Endothelial cell of umbilical vein (primary cell): ENCODE measurements at regions of chrX and their contacts with region 1.

Region 1: DNA sequence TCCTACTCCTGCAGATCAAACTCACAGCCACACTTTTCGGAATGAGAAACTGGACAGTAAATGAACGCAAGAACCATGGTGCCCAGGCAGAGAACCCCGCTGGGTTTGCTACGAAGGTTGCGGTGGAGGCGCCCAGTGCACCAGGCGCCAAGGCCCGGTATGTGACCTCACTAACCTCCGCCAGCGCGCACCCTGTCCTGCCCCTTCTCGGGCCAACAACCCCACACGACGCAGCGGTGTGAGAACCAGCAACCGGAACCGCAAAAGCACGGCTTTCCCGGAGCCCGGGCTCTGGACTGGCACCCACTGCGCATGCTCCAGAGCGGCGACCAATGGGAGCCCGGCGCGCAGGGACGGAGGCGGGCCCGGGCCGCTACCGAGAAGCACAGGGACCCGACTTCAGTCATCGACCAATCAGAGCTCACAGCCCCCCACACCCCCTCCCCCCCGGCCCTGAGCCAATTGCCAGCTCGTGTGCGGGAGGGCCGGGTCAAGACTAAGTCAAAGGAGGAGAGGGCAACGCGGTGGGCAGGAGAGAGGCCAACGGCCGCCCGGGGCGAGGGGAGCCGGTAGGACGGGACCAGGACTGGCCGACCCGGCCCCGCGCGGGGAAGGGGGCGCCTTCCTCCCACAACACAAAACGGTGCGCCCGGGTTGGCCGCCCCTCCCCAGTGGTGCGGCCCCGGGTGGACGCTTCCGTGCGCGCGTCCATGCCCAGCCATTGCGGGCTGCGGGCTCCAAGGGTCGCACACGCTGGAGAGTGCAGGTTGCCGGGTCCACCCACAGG is 7.3 kb upstream of the WAS start:
- DNase-seq: peak; percentile 91
- H3K4me3 ChIP-seq: peak overlapping the region; percentile 62 to 82 (median 73)
- H3K27ac ChIP-seq: peak overlapping the region; percentile 41
- H3K4me1 ChIP-seq: no peaks in the 10 kb centered on the region
- H3K27me3 ChIP-seq: no peaks in the 10 kb centered on the region
- CTCF ChIP-seq: no peak
- POLR2A ChIP-seq: peak; percentile 59

Region 2: GRCh38 chrX:48475774-48476577 is 200.3 kb before region 1 on chrX and contains the start of gene FTSJ1:
- CTCF ChIA-PET with region 1: no interaction called
- POLR2A ChIA-PET with region 1: no interaction called
- dilution Hi-C with region 1: no loop called
- intact Hi-C with region 1: loop called (anchors 5 kb)
- DNase-seq: peak; percentile 92
- H3K4me3 ChIP-seq: peak within 1 kb of the TSS; percentile 76 to 91 (median 88)
- H3K27ac ChIP-seq: peak within 1 kb of the TSS; percentile 56
- H3K4me1 ChIP-seq: peaks cover 6% of the 10 kb centered on the region
- H3K27me3 ChIP-seq: no peaks in the 10 kb centered on the region
- CTCF ChIP-seq: no peak
- POLR2A ChIP-seq: peak; percentile 68
- total RNA-seq, gene FTSJ1: 52.9 and 59.9 TPM in 2 replicates

Region 3: DNA sequence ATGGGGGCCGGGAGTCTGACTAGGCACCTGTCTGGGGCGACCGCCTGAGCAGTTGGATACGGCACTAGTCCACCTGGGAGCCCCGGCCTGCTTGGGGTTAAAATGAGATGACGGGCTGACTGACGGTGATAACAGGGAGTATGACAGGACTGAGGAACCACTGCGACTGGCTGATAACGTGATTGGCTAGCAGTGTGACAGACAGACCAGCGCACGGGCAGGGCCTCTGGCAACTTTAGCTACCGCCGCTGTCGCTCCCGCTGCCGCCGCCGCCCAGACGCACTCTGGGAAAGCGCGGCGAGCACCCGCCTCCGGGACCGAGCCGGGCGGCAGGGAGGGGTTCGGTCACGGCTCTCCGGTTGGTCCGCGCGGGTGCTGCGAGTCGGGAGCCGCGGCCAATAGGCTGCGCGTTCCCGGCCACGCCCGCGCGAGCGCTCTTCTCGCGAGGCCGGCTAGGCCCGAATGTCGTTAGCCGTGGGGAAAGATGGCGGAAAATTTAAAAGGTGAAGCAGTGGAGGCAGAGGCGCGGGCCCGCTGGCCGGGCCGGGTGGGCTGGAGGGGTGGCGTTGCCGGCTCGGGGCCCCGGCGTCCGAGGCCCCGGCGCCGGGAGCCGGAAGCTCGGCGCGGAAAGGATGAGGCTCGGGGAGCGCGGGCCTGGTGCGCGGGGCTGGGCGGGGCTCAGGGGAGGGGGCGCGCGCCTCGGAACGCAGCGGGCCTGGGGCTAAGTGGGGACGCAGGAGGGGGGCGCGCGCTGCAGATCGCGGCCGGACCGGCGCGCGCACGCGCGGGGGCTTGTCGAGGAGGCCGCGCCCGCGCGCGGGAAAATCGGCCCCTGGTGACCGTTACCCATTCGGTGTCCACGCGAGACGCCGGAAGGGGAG is 20.2 kb after region 1 on chrX and contains the start of gene SUV39H1:
- CTCF ChIA-PET with region 1: no interaction called
- POLR2A ChIA-PET with region 1: no interaction called
- dilution Hi-C with region 1: no loop called
- intact Hi-C with region 1: loop called (anchors 2 kb)
- DNase-seq: peak; percentile 87
- H3K4me3 ChIP-seq: peak within 1 kb of the TSS; percentile 60 to 76 (median 72)
- H3K27ac ChIP-seq: peak within 1 kb of the TSS; percentile 57
- H3K4me1 ChIP-seq: peaks cover 5% of the 10 kb centered on the region
- H3K27me3 ChIP-seq: no peaks in the 10 kb centered on the region
- CTCF ChIP-seq: no peak
- POLR2A ChIP-seq: peak; percentile 80
- total RNA-seq, gene SUV39H1: 18.2 and 20.0 TPM in 2 replicates

Region 4: DNA sequence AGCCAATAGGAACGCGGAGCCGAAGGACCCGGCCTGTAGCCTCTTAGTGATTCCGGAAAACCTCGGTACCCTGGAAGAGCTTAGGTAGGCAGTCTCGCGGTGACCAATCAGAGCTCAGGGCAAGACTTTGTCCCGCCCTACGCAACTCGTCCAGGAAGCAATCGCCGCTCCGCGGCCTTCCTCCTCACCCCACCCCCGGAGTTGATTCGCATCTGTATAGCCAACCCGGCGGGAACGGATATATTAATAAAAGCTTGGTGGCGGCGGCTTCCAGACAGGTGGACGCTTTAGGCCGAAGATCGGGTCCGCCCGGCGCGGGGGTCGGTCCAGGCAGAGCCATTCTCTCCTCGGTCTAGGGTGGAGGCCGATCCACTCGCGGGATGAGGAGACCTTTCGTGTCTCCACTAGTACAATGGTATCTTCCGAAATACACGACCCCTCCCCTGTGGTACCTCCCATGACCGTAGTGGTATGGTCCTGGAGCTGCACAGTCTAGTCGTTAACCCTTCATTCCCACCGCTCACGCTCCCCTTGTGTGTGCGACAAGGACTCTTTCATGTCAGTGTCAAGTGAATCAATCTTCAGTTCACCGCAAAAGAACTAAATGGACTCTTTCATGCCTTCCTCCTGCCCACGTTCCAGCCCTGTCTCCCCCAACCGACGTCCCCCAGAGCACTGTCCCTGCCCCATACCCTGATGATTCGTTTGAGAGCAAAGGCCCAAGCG is 61.1 kb after region 1 on chrX:
- CTCF ChIA-PET with region 1: no interaction called
- POLR2A ChIA-PET with region 1: no interaction called
- dilution Hi-C with region 1: no loop called
- intact Hi-C with region 1: loop called (anchors 2 kb)
- DNase-seq: peak; percentile 95
- H3K4me3 ChIP-seq: peak overlapping the region; percentile 11 to 58 (median 45)
- H3K27ac ChIP-seq: peak overlapping the region; percentile 64
- H3K4me1 ChIP-seq: peaks cover 3% of the 10 kb centered on the region
- H3K27me3 ChIP-seq: no peaks in the 10 kb centered on the region
- CTCF ChIP-seq: no peak
- POLR2A ChIP-seq: peak; percentile 75